Endothelial cell of umbilical vein (primary cell): ENCODE measurements at regions of chr7 and their contacts with region 1.

Region 1: DNA sequence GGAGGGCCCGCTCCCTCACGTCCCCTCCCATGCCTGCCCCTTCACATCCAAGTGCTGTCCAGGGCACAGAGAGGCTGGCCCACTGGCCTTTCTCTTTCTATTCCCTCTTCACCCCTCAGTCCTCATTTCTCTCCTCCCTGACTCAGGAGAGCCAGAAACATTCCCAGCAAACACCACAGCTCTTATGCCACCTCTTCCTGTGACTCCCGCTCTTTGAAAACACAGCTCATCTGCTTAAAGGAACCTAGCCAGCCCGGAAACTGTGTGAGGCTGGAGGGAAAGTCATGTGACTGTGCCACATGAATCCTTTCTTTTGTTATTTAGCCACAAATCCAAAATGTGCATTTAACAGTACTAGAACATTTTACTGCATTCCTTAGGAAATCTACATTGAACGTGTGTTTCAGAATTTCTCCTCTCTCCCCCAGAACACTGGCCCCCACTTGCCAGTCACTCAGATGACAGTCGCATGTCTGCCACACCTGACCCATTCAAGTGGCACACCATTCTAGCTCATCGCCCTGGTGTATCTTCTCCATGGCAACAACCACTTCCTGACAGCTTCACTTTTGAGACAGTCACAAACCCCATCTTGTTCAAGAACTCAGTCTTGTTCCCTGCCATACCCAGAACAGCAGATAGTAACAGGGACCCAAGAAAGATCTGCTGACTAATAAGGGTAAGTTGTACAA is 42.8 kb downstream of the GRB10 start:
- DNase-seq: peak; percentile 46
- H3K4me3 ChIP-seq: no peak overlapping the region
- H3K27ac ChIP-seq: peak overlapping the region; percentile 20
- H3K4me1 ChIP-seq: peaks cover 13% of the 10 kb centered on the region
- H3K27me3 ChIP-seq: no peaks in the 10 kb centered on the region
- CTCF ChIP-seq: no peak
- POLR2A ChIP-seq: no peak

Region 2: DNA sequence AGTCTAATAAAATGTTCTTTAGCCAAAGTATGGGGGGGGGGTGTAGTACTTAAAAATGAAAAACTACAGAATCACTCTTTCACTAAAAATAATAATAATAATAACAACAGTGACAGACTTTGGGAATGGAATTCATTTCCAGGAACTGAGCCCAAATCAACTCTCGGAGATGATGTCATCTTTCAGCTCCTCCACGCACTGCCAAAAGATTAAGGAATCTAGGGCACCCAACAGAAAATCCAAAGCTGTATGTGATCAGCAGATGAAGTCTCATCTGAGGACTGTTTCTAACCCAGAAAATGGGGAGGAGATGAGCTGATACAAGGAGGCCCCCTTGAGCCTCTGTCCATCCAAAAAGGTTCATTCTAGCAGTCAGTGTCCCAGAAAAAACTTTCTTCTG is 11.7 kb before region 1 on chr7:
- CTCF ChIA-PET with region 1: interaction called, 11 read pairs
- POLR2A ChIA-PET with region 1: interaction called, 3 read pairs
- dilution Hi-C with region 1: no loop called
- intact Hi-C with region 1: no loop called
- DNase-seq: no peak
- H3K4me3 ChIP-seq: no peak overlapping the region
- H3K27ac ChIP-seq: peak overlapping the region; percentile 29
- H3K4me1 ChIP-seq: peaks cover 57% of the 10 kb centered on the region
- H3K27me3 ChIP-seq: no peaks in the 10 kb centered on the region
- CTCF ChIP-seq: no peak
- POLR2A ChIP-seq: no peak

Region 3: DNA sequence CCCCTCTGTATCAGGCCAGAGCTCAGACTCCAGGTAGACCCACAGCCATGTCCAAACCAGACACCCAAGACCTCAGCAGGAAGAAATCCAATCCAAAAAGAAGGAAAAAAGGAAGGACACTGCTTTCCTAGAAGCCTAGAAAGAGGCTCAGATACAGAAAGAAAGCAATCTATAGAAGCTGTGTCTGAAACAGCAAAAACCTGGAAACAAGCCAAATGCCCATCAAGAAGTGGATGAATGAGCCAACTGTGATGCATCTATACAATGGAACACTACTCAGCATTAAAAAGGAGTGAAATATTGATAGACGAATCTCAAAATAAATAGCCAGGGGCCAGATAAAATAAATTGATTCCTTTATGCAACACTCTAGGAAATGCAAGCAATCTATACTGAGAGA is 11.3 kb after region 1 on chr7:
- CTCF ChIA-PET with region 1: no interaction called
- POLR2A ChIA-PET with region 1: no interaction called
- dilution Hi-C with region 1: no loop called
- intact Hi-C with region 1: no loop called
- DNase-seq: no peak
- H3K4me3 ChIP-seq: no peak overlapping the region
- H3K27ac ChIP-seq: no peak overlapping the region
- H3K4me1 ChIP-seq: peaks cover 3% of the 10 kb centered on the region
- H3K27me3 ChIP-seq: no peaks in the 10 kb centered on the region
- CTCF ChIP-seq: no peak
- POLR2A ChIP-seq: no peak